Mucosa of descending colon (tissue), 3 donors: ENCODE measurements at regions of chr11 and their contacts with region 1.

Region 1: DNA sequence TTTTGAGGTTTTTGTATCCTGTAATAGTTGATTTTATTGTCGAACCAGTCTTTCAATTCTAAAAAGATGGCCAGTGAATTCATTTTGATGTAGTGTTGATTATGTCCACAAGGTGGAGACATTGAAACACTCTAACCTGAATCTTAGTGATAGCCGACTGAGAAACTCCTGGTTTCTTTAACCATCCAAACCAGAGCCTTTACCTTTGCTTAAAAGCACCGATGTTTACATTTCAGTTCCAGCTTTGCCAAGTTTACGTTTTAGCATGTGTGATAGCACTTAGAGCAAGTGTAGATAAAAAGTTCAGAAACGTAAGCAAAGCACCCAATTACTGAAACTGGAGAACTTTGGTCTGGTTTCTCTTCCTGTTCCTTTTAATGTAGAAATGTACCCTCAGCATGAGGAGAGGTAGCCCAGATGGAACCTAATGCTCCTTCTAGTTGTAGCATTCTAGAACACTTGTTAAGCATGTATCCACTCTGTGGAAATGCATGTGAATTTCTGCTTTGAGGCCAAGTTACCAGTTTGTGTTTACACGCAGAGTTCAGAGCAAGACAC is 208.6 kb downstream of the DBX1 start:
- DNase-seq: peak in 1 of 3 donors; percentile 29
- ATAC-seq: peak; percentile 82
- H3K4me3 ChIP-seq: no peak overlapping the region
- H3K4me1 ChIP-seq: no peaks in the 10 kb centered on the region
- CTCF ChIP-seq: peak; percentile 37

Region 2: DNA sequence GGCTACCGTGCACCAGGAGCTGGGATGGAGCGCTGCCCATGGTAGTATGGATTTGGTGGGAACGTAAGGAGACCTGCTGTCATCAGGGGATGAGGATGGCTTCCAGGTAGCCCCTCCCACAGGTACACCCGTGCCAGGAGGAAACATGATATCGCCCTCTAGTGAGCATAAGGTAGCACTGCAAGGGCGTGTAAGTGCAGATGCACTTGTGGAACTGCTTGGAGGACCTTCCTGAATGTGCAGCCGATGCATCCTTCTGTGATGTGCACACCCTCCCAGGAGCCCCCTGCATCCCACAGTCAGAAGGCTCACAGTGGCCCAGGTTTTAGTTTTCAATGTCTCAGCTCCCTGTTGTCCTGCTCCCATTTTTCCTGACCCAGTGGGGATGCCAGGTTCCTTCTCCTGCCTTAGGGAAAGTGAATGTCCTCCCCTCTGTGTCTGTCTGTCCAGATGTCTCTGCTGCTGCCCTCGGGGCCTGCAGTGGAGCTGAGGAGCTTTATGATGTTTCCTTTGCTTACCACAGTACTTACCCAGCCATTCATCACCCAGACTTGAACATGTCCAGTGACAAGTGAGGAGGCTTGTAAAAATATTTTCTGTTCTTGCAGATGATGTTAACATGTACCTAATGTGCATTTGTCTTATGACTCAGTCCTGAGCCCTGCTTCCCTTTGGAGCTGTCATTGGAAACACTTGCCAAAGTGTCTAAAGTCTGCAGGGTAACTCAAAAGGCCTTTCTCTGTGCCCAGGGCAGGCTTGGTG is 159.5 kb after region 1 on chr11:
- intact Hi-C with region 1: loop called in 1 of 2 experiments (anchors 1 kb)
- DNase-seq: peak in 2 of 3 donors; percentile 46 to 79
- ATAC-seq: peak; percentile 77
- H3K4me3 ChIP-seq: no peak overlapping the region
- H3K4me1 ChIP-seq: peaks cover 3% of the 10 kb centered on the region
- CTCF ChIP-seq: peak; percentile 74